ENCODE measurements at regions of chr1 and their contacts with region 1.

Region 1: DNA sequence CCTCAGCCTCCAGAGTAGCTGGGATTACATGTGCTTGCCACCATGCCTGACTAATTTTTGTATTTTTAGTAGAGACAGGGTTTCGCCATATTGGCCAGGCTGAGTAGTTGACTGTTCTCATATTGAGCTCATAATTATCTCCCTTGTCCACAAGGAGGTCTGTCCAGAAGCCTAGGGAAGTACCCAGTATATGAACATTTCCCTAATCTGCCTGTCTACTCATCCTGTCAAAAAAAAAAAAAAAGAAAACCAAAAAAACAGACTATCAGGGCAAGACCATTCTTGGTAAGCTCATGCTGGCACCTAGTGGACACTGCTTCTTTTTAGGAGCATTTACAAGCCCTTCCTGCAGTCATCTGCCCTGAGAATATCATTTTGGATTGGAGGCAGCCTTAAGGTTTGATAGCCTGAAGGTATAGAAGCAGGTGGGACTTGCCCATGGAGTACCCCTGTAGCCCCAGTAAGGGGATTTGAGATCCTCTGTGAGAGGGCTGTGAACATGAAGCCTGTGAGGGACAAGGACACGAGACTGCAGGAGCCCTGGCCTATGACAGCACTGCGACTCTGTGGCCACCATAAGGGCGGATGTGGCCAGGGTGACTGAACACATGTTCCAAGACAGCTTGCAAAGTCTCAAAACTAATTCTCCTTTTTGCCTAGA is 10.8 kb upstream of the DUSP12 start:
- DNase-seq: peak; percentile 71
- H3K4me3 Mint-ChIP-seq: peak overlapping the region; percentile 5
- H3K27ac Mint-ChIP-seq: peak overlapping the region; percentile 46
- H3K4me1 Mint-ChIP-seq: peaks cover 38% of the 10 kb centered on the region
- H3K27me3 Mint-ChIP-seq: peaks cover 33% of the 10 kb centered on the region

Region 2: DNA sequence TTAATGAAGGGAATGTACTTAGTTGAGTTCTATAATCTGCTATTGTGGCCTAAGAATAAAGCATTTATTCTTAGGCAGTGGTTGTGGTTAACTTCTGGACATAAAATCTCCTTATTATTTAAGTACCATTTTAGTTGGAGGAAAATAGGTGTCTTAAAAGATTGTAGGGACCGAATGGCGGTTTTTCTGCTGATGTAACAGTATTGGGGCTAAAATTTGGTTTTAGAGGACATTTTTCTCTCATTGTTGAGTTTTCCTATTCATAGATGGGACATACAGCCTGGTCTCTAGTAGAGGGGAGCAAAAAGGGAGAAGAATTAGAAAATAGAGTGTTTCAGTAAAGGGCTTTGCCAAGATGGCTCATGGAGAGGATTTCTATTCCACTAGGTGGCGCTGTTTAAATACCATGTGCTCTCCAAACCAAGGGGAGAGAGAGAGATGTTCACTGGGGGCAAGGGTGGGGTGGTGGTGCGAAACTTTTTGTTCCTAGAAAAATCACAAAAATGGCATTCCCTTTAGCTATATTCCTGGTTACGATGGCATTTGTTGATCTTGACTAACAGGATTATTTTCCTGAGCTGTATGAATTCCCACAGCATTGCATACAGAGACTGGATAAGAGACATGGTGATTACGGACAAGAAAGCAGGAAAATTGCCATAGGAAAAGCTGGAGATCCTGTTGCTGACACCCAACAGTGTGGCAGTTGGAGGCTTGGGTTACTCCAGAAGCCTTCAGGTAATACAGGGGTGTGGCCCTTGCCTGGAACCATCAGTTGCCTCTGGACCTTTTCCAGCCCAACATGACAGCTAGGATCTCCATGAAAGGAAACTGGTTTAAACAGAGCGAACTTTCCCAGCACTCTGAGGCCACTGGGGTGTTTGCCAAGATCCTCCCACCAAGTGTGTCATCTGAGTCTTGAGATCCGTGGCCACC is 251.7 kb before region 1 on chr1:
- CTCF ChIA-PET with region 1: interaction called, 71 read pairs
- DNase-seq: peak; percentile 47
- H3K4me3 Mint-ChIP-seq: no peak overlapping the region
- H3K27ac Mint-ChIP-seq: no peak overlapping the region
- H3K4me1 Mint-ChIP-seq: peaks cover 15% of the 10 kb centered on the region
- H3K27me3 Mint-ChIP-seq: peaks cover 34% of the 10 kb centered on the region

Region 3: GRCh38 chr1:161726596-161727457 is 11.9 kb before region 1 on chr1:
- CTCF ChIA-PET with region 1: interaction called, 11 read pairs
- DNase-seq: peak; percentile 82
- H3K4me3 Mint-ChIP-seq: peak overlapping the region; percentile 76
- H3K27ac Mint-ChIP-seq: peak overlapping the region; percentile 88
- H3K4me1 Mint-ChIP-seq: peaks cover 49% of the 10 kb centered on the region
- H3K27me3 Mint-ChIP-seq: peaks cover 80% of the 10 kb centered on the region

Region 4: DNA sequence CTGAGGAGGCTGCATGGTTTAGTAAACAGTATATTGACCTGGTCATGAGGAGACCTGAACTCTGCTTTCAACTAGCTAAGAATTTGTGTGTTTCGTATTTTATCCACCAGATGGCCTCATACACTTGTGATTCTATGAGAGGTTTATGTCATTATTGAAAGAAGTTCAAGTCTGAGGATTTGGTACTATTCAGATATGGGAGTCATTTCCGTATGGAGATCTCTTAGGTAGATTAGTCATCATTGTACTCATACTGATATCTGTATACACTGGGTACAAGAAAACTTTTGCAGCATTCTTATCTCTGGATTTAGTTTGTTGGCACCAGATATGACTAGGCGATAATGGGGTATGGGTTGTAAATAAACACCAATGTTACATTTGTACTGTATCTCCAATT is 54.0 kb after region 1 on chr1:
- CTCF ChIA-PET with region 1: no interaction called
- DNase-seq: no peak
- H3K4me3 Mint-ChIP-seq: no peak overlapping the region
- H3K27ac Mint-ChIP-seq: peak overlapping the region; percentile 50
- H3K4me1 Mint-ChIP-seq: peaks cover 4% of the 10 kb centered on the region
- H3K27me3 Mint-ChIP-seq: no peaks in the 10 kb centered on the region